Activated B cell treated with CpG ODN at 0.5 μM for 24 hours (primary cell): ENCODE measurements at regions of chr2 and their contacts with region 1.

Region 1: GRCh38 chr2:102473020-102473419 is at the start of gene SLC9A4:
- DNase-seq: no peak
- ATAC-seq: peak; percentile 58
- H3K4me3 Mint-ChIP-seq: no peak within 1 kb of the TSS
- H3K27ac Mint-ChIP-seq: no peak within 1 kb of the TSS
- H3K4me1 Mint-ChIP-seq: no peaks in the 10 kb centered on the region
- H3K27me3 Mint-ChIP-seq: peaks cover 21% of the 10 kb centered on the region
- CTCF ChIP-seq: peak; percentile 89
- total RNA-seq, gene SLC9A4: 0.05 and 0.11 TPM in 2 replicates

Region 2: DNA sequence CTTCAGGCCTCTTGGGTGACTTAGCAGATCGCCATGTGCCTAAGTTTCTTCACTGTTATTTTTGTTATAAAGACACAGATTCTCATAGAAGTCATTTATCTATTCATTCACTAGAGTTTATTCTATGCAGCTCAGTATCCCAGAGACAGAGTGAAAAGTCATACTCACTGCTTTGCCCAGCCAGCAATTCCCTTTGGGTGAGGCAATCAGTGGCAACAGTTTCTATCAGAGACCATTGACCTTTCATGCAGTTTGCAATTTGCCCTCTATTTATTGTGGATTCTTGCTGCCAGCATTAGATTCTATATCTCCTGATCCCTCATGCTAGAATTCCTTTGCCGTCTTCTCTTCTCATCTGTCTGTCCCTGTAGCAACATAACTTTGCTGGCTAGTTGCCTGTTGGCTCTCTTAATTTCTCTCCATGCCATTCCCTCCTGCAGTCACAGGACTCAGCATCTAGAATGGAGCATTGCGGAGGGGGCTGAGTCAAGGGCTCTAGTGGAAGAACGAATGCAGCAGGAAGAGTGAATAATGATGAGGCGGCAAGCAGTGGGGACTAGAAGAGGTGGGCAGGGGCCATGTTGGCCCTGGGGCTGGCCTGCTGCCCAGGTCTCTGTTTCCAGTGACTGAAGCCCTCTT is 12.2 kb after region 1 on chr2:
- CTCF ChIA-PET with region 1: interaction called, 10 read pairs
- POLR2A ChIA-PET with region 1: no interaction called
- intact Hi-C with region 1: no loop called
- DNase-seq: no peak
- ATAC-seq: no peak
- H3K4me3 Mint-ChIP-seq: no peak overlapping the region
- H3K27ac Mint-ChIP-seq: no peak overlapping the region
- H3K4me1 Mint-ChIP-seq: no peaks in the 10 kb centered on the region
- H3K27me3 Mint-ChIP-seq: peaks cover 21% of the 10 kb centered on the region
- CTCF ChIP-seq: no peak

Region 3: DNA sequence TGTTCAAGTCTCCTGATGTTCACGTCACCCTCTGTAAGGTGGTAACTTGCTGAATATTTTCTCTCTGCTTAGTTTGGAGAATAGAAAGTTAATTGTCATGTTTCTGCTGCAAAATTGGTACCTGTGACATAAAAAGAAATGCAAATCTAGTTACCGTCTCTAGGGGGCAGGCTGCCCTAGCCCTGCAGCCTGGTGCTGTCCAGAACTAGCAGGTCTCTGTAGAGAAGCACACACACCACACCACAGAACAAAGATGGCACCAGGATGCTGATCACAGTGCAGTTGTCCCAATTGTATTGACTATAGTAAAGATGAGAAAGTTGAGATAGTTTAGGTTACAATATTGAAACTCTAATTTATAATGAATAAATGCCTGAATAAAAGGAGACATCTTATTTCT is 47.0 kb after region 1 on chr2:
- CTCF ChIA-PET with region 1: no interaction called
- POLR2A ChIA-PET with region 1: no interaction called
- intact Hi-C with region 1: loop called (anchors 5 kb)
- DNase-seq: no peak
- ATAC-seq: peak; percentile 45
- H3K4me3 Mint-ChIP-seq: no peak overlapping the region
- H3K27ac Mint-ChIP-seq: no peak overlapping the region
- H3K4me1 Mint-ChIP-seq: no peaks in the 10 kb centered on the region
- H3K27me3 Mint-ChIP-seq: peaks cover 4% of the 10 kb centered on the region
- CTCF ChIP-seq: no peak

Region 4: GRCh38 chr2:102592597-102592996 is 119.6 kb after region 1 on chr2:
- CTCF ChIA-PET with region 1: interaction called, 6 read pairs
- POLR2A ChIA-PET with region 1: no interaction called
- intact Hi-C with region 1: loop called (anchors 1 kb)
- DNase-seq: no peak
- ATAC-seq: no peak
- H3K4me3 Mint-ChIP-seq: no peak overlapping the region
- H3K27ac Mint-ChIP-seq: no peak overlapping the region
- H3K4me1 Mint-ChIP-seq: no peaks in the 10 kb centered on the region
- H3K27me3 Mint-ChIP-seq: peaks cover 13% of the 10 kb centered on the region
- CTCF ChIP-seq: no peak

Region 5: DNA sequence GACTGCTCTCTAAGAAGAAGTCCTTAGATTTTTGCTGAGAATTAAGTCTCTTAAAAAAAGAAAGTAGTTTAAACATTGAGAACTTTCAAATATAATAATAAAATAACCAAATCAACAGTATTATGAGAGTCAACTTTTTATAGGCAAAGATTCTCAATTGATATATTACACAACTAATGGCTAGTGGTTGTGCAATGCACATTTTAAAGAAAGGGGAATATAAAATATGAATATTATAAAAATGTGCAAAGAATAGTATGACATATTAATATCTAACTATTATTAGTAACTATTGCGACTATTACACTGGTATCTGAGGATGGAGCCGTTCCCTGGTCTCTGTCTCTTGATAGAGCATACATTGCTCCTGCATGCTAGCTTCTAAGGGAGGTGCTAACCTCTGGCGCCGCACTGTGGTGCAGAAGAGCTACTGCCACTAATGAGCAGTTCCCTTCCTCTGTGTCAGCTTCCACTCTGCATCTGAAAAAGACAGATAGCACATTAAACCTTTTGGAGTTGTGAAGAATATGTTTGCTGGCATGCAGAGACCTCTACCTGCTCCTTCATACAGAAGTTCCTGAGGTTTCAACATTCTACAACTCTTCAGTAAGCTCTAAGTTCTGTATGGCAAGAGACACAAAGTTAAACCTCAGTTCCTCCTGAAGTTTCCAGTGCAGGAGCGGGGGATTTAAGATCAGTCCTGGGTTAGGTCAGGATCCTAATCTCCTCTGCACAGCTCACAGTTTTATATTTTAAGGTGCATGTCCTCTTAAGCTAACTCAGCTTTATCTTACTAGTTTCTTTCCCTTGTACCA is 142.8 kb after region 1 on chr2:
- CTCF ChIA-PET with region 1: interaction called, 123 read pairs
- POLR2A ChIA-PET with region 1: no interaction called
- intact Hi-C with region 1: loop called (anchors 1 kb)
- DNase-seq: no peak
- ATAC-seq: peak; percentile 76
- H3K4me3 Mint-ChIP-seq: no peak overlapping the region
- H3K27ac Mint-ChIP-seq: no peak overlapping the region
- H3K4me1 Mint-ChIP-seq: peaks cover 7% of the 10 kb centered on the region
- H3K27me3 Mint-ChIP-seq: peaks cover 42% of the 10 kb centered on the region
- CTCF ChIP-seq: peak; percentile 77